BJ (cell line): ENCODE measurements at regions of chr20 and their contacts with region 1.

Region 1: DNA sequence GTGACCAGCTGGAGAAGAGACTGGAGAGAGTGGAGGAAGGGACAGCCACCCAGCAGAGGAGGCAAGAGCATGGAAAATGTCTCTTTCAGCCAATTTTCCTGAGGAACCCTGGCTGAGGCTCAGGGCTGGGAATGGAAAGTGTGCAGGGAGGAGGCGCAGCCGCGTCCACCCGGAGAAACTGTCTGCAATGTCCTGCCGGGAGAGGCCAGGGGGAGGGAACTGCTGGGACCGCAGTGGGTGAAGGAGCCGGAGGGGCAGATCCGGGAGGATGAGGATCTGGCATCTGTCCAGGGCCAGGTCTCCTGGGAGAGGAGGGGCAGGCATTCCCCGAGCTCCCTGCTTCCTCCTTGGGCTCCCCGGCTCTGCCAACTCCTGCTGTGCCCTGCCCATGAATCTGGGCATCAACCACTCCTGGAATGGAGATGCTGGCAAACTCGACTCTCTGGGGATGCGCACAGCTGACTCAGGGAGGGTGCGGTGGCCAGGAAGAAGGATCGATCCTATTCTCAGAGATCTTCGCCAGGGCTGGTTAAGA is 17.4 kb upstream of the HM13 start:
- DNase-seq: no peak
- H3K4me3 ChIP-seq: no peak overlapping the region
- H3K27me3 ChIP-seq: peaks cover 6% of the 10 kb centered on the region
- CTCF ChIP-seq: no peak

Region 2: GRCh38 chr20:31452575-31452974 is 44.3 kb before region 1 on chr20:
- CTCF ChIA-PET with region 1: interaction called, 125 read pairs
- POLR2A ChIA-PET with region 1: no interaction called
- DNase-seq: no peak
- H3K4me3 ChIP-seq: no peak overlapping the region
- H3K27me3 ChIP-seq: no peaks in the 10 kb centered on the region
- CTCF ChIP-seq: no peak

Region 3: DNA sequence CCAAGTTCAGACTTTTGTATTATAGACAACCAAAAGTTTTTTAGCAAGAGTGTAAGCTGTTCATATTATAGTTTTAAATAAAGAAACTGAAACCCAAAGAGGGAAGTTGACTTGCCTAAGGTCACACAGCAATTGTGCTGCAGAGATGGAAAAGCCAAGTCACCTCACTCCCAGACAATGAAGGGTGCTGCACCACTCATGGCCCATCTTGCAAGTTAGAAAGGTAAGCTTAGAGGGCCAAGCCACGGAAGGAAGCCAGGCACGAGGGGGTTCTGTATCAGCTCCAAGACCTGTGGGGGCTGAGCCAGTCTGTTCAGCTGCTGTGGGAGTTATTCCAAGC is 22.8 kb before region 1 on chr20:
- CTCF ChIA-PET with region 1: interaction called, 37 read pairs
- POLR2A ChIA-PET with region 1: no interaction called
- DNase-seq: no peak
- H3K4me3 ChIP-seq: no peak overlapping the region
- H3K27me3 ChIP-seq: peaks cover 22% of the 10 kb centered on the region
- CTCF ChIP-seq: no peak

Region 4: DNA sequence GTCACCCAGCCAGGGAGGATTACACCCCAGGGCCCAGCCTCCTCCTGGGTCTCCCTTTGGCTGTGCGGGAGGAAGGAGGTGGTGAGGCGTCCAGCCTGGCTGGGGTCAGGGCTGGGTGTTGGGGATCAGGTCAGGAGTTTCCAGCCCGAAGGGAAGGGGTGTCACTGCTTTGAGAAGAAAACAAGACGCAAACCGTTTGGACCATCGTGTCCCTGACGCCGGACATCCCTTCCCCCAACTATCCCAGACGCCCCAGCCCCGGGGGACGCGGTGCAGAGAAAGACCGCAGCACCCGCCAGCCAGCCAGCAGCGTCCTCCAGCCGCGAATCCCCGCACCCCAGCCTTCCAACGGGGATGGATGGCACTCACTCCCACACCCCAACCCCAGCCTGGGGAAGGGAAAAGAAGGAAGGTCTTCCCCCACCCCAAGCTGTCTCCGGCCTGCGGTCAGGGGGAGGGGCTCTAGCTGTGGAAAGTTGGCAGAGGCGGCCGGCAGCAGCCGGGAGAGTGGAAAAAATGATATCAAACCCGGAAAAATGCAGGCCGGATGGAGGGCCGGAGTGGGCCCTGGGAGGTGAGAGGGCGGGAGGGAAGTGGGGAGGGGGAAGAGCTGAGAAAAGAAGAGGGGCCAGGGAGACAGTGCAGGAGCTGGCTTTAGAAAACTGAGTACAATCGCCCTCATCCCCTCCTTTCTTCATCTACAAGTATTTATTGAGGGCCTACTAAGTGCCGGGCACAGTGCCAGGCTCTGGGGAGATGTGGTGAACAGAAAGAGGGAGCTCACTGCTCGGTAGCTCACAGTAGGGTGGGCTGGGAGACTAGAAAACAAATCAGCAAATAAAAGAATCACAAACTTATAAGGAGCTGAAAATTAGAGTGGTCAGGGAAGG is 11.1 kb before region 1 on chr20:
- CTCF ChIA-PET with region 1: interaction called, 60 read pairs
- POLR2A ChIA-PET with region 1: no interaction called
- DNase-seq: no peak
- H3K4me3 ChIP-seq: no peak overlapping the region
- H3K27me3 ChIP-seq: peaks cover 2% of the 10 kb centered on the region; the same call in 1 of the 2 replicates
- CTCF ChIP-seq: no peak

Region 5: GRCh38 chr20:31514159-31515071 is 17.6 kb after region 1 on chr20 and contains the start of gene HM13:
- CTCF ChIA-PET with region 1: interaction called, 21 read pairs
- POLR2A ChIA-PET with region 1: no interaction called
- DNase-seq: peak; percentile 51
- H3K4me3 ChIP-seq: peak within 1 kb of the TSS; percentile 96
- H3K27me3 ChIP-seq: no peaks in the 10 kb centered on the region
- CTCF ChIP-seq: peak; percentile 81
- polyA plus RNA-seq, gene HM13: 236 and 324 TPM in 2 replicates